Adrenal gland (tissue), 19 donors: ENCODE measurements at regions of chr17 and their contacts with region 1.

Region 1: GRCh38 chr17:82664701-82665182 is 16.5 kb upstream of the WDR45B start:
- DNase-seq: no peak
- H3K4me3 ChIP-seq: no peak overlapping the region
- H3K27ac ChIP-seq: no peak overlapping the region
- H3K4me1 ChIP-seq: peaks cover 6 to 7% of the 10 kb centered on the region in 2 donors
- H3K27me3 ChIP-seq: no peaks in the 10 kb centered on the region
- CTCF ChIP-seq: no peak
- POLR2A ChIP-seq: no peak

Region 2: GRCh38 chr17:82536512-82537201 is 128.1 kb before region 1 on chr17:
- intact Hi-C with region 1: no loop called
- DNase-seq: peak; percentile 59 to 81 (median 66)
- H3K4me3 ChIP-seq: peak overlapping the region in 1 of 4 donors; percentile 43
- H3K27ac ChIP-seq: peak overlapping the region; percentile 75 to 98 (median 93)
- H3K4me1 ChIP-seq: peaks cover 33 to 68% of the 10 kb centered on the region in 2 donors
- H3K27me3 ChIP-seq: no peaks in the 10 kb centered on the region
- CTCF ChIP-seq: no peak
- POLR2A ChIP-seq: no peak

Region 3: DNA sequence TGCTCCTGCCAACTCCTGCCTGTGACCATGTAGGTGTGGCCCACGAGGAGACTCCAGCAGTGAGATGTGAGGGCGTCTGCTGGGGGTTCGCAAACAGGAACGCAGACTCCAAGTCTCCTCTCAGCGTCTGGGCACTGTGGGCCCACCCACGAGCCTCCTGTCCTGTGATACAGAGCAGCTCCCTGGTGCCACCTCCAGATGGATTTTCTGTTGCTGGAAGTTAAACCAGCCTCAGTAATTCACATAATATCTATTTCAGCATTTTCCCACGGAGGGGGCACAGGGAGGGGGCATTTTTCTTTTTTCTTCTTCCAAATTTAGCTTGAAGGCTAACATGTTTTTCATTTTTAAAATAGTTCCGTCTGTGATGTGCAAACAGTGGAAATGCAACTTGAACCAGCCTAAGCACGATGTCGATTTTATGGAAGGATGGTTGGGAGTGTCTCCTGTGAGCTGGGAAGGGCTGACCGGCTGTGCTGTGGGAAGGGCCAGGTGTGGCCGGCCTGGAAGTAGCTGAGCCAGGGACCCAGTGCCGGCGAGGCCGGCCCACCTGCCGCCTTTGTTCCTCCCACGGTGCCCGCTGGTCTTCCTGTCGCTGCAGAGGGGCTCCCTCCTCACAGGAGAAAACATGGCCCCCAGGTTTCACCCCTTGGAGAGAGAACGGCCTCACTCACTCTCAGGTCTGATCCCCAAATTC is 37.6 kb after region 1 on chr17:
- intact Hi-C with region 1: loop called in 1 of 2 experiments (anchors 5 kb)
- DNase-seq: no peak
- H3K4me3 ChIP-seq: no peak overlapping the region
- H3K27ac ChIP-seq: no peak overlapping the region
- H3K4me1 ChIP-seq: peaks cover 6% of the 10 kb centered on the region in 2 donors
- H3K27me3 ChIP-seq: no peaks in the 10 kb centered on the region
- CTCF ChIP-seq: no peak
- POLR2A ChIP-seq: no peak

Region 4: DNA sequence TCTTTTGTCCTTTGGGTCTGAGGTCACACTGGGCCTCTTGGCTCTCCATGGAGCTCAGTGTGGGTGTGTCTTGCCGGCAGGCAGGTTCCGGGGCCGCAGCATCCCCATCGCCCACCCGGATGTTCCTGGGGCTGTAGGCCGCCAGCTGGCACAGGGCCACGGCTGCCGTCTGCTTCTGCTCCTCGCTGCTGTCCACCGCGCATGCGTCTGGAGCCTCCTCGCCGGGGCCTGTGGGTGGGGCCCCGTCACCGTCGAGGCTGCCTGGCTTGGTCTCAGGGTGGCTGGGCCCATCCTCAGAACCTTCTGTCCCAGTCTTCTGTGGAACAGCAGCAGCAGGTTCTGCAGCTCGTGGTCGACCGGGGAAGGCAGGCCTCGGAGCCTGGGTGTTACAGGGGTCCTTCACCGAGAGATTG is 165.5 kb after region 1 on chr17:
- intact Hi-C with region 1: no loop called
- DNase-seq: peak in 2 of 7 donors; percentile 35 to 39
- H3K4me3 ChIP-seq: no peak overlapping the region
- H3K27ac ChIP-seq: no peak overlapping the region
- H3K4me1 ChIP-seq: no peaks in the 10 kb centered on the region
- H3K27me3 ChIP-seq: no peaks in the 10 kb centered on the region
- CTCF ChIP-seq: no peak
- POLR2A ChIP-seq: no peak